GM10248 (cell line): ENCODE measurements at regions of chr14 and their contacts with region 1.

Region 1: DNA sequence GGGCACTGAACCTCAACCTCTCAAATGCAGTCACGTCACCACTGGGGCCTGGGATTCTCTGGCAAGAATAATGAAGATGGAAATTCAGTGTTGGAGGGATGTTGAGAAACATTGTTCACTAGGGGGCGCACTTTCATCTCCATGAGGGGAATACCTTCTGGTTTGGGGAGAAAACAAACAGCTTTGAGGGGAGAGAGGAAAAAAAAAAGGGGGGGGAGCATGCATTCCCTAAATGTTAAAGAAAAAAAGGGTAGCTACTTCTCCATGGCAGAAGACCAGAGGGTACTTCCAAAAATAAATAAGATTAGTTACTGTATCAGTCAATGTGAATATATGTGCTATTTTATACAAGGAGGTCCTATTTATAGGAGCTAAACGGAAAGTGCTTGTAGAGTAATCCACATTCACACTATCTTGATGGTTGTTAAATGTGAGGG is 5.8 kb upstream of the TBPL2 start:
- DNase-seq: peak; percentile 61
- CTCF ChIP-seq: peak; percentile 76

Region 2: DNA sequence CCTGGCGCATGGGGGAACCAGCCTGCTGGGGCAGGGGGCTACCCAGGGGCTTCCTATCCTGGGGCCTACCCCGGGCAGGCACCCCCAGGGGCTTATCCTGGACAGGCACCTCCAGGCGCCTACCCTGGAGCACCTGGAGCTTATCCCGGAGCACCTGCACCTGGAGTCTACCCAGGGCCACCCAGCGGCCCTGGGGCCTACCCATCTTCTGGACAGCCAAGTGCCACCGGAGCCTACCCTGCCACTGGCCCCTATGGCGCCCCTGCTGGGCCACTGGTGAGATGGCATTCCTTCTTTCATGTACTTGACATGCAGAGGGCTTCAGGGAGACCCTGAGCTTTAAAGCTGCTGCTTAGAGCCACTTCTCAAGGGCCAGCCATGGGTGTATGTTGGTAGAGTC is 308.1 kb before region 1 on chr14:
- CTCF ChIA-PET with region 1: no interaction called
- POLR2A ChIA-PET with region 1: no interaction called
- DNase-seq: no peak
- CTCF ChIP-seq: peak; percentile 10

Region 3: DNA sequence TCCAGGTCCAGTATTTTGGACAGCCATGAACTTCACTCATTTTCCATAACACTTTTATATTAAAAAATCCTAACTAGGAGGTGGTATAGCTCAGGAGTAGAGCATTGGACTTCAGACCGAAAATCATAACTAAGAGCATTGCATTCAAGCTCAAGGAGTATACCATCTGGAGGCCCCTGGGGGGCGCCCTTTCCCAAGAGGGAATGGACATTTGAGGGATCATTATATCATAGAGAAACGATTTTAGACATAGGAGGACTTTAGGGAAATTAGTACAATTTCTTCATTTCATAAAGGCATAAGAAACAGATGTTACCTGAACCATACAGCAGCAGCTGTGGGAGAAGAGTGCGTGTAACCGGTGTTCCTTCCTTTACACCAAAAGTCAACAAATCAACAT is 29.4 kb before region 1 on chr14:
- CTCF ChIA-PET with region 1: interaction called, 29 read pairs
- POLR2A ChIA-PET with region 1: no interaction called
- DNase-seq: peak; percentile 14
- CTCF ChIP-seq: no peak

Region 4: GRCh38 chr14:55430024-55430690 is 16.1 kb before region 1 on chr14:
- CTCF ChIA-PET with region 1: interaction called, 72 read pairs
- POLR2A ChIA-PET with region 1: no interaction called
- DNase-seq: peak; percentile 65
- CTCF ChIP-seq: peak; percentile 40

Region 5: GRCh38 chr14:55467307-55467706 is 21.1 kb after region 1 on chr14:
- CTCF ChIA-PET with region 1: interaction called, 16 read pairs
- POLR2A ChIA-PET with region 1: no interaction called
- DNase-seq: no peak
- CTCF ChIP-seq: no peak